Thyroid gland (tissue), 4 donors: ENCODE measurements at regions of chr2 and their contacts with region 1.

Region 1: GRCh38 chr2:19349911-19350677 is 8.3 kb downstream of the OSR1 start:
- DNase-seq: peak; percentile 44 to 59
- H3K4me3 ChIP-seq: peak overlapping the region in 1 of 3 donors; percentile 29
- H3K27ac ChIP-seq: peak overlapping the region in 2 of 3 donors; percentile 32 to 66
- H3K4me1 ChIP-seq: peaks cover 22 to 26% of the 10 kb centered on the region in 2 donors
- H3K27me3 ChIP-seq: peaks cover 33% of the 10 kb centered on the region
- CTCF ChIP-seq: peak; percentile 21 to 61 (median 30)
- POLR2A ChIP-seq: no peak

Region 2: DNA sequence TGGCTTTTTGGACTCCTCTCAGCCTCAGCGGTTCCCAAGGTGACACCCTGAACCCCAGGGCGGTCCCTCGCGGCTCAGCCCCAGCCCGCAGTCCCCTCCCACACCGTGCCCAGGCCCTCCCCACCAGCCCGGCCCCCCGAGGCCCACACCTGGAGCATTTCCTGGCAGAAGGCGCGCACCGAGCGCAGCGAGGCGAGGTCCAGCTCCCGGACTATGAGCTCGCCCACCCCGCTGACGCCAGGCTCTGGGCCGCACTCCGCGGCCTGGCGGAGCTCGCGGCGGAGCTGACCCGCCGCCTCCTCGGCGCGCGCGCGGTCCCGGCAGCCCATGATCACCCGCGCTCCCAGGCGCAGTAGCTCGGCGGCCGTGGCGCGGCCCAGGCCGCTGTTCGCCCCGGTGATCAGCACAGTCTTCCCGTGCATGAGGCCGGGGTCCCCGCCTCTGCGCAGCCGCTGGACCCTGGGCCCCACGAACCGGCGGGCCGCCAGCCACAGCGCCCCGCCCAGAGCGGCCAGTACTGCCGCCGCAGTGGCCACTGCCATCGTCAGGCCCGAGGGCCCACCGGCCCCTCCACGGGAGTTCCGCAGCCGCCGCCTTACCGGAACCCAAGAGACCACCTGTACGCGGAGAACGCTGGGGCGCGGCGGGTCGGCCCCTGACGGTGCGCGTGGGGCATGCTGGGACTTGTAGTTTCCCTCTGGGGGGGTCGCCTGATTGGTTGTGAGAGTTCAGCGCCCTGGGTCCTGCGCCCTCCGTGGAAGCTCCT is 789.9 kb before region 1 on chr2 and contains the start of gene RDH14:
- intact Hi-C with region 1: loop called (anchors 5 kb)
- DNase-seq: peak; percentile 97 to 98
- H3K4me3 ChIP-seq: peak within 1 kb of the TSS; percentile 38 to 95 (median 66)
- H3K27ac ChIP-seq: peak within 1 kb of the TSS; percentile 94 to 99 (median 94)
- H3K4me1 ChIP-seq: peaks cover 7 to 22% of the 10 kb centered on the region in 2 donors
- H3K27me3 ChIP-seq: no peaks in the 10 kb centered on the region
- CTCF ChIP-seq: peak in 2 of 6 experiments; percentile 5 to 9
- POLR2A ChIP-seq: peak in 1 of 2 donors; percentile 77
- total RNA-seq, gene RDH14: 34.3 to 58.3 (median 44.4) TPM

Region 3: GRCh38 chr2:18987592-18988073 is 362.5 kb before region 1 on chr2:
- intact Hi-C with region 1: loop called (anchors 10 kb)
- DNase-seq: peak; percentile 63 to 74
- H3K4me3 ChIP-seq: no peak overlapping the region
- H3K27ac ChIP-seq: peak overlapping the region in 1 of 3 donors; percentile 45
- H3K4me1 ChIP-seq: peaks cover 41 to 46% of the 10 kb centered on the region in 2 donors
- H3K27me3 ChIP-seq: no peaks in the 10 kb centered on the region
- CTCF ChIP-seq: peak in 4 of 6 experiments; percentile 14 to 26 (median 20)
- POLR2A ChIP-seq: no peak

Region 4: DNA sequence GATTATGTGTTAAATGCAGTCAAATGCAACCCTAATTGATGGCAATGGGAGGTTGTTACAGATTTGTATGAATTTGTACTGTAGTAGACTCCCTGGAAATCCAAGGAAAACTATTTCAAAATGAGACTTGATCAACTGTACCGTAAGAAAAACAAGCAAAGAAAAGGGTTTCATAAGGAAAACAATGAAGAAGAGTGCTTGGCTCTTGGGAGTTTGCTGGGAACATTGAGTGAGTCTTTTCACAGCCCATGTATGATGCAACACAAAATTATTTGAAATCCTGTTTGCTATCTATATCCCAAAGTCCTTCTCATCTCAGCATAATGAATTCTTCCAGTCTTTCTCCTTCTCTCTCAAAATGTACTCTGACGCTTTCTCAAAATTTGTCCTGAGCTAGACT is 75.3 kb after region 1 on chr2:
- intact Hi-C with region 1: no loop called
- DNase-seq: no peak
- H3K4me3 ChIP-seq: no peak overlapping the region
- H3K27ac ChIP-seq: no peak overlapping the region
- H3K4me1 ChIP-seq: no peaks in the 10 kb centered on the region
- H3K27me3 ChIP-seq: no peaks in the 10 kb centered on the region
- CTCF ChIP-seq: no peak
- POLR2A ChIP-seq: no peak